IMR-90 (cell line): ENCODE measurements at regions of chr12 and their contacts with region 1.

Region 1: GRCh38 chr12:76763743-76764675 is at the start of gene ZDHHC17:
- DNase-seq: peak; percentile 92
- ATAC-seq: peak; percentile 94
- H3K4me3 ChIP-seq: peak within 1 kb of the TSS; percentile 96
- H3K27ac ChIP-seq: peak within 1 kb of the TSS; percentile 100
- H3K4me1 ChIP-seq: peaks cover 2% of the 10 kb centered on the region
- H3K27me3 ChIP-seq: no peaks in the 10 kb centered on the region
- CTCF ChIP-seq: no peak
- POLR2A ChIP-seq: peak; percentile 79
- RAD21 ChIP-seq: no peak
- total RNA-seq, gene ZDHHC17: 86.4 and 125 TPM in 2 replicates

Region 2: DNA sequence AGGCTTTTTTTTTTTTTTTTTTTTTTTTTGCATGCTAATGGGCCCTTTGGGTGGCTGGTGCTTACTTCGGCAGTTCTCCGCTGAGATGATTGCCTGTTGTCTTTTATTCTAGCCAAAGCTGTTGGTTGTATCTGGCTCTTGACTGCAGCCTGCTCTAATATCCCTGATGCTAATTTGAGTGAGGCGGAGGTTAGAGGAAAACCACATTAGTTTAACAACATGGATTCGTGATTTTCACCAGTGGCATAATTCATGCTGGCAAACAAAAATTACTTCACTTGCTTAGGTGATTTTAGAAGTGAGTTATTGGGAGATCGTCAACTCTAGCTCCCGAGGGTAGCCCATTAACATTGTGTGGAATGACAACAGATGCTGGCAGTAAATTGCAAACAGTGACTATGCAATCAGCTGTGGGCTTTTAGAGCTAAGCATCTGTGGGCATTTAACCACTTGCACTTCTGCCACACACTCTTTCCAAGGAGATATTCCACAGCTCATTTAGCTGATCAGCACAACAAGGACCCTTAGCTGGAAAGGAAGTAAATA is 97.6 kb before region 1 on chr12:
- CTCF ChIA-PET with region 1: no interaction called
- POLR2A ChIA-PET with region 1: no interaction called
- dilution Hi-C with region 1: no loop called
- in situ Hi-C with region 1: no loop called
- intact Hi-C with region 1: no loop called
- DNase-seq: no peak
- ATAC-seq: no peak
- H3K4me3 ChIP-seq: no peak overlapping the region
- H3K27ac ChIP-seq: no peak overlapping the region
- H3K4me1 ChIP-seq: peaks cover 9% of the 10 kb centered on the region
- H3K27me3 ChIP-seq: no peaks in the 10 kb centered on the region
- CTCF ChIP-seq: no peak
- POLR2A ChIP-seq: no peak
- RAD21 ChIP-seq: no peak

Region 3: GRCh38 chr12:76685246-76685678 is 78.7 kb before region 1 on chr12:
- CTCF ChIA-PET with region 1: interaction called, 5 read pairs
- POLR2A ChIA-PET with region 1: no interaction called
- dilution Hi-C with region 1: no loop called
- in situ Hi-C with region 1: no loop called
- intact Hi-C with region 1: loop called (anchors 5 kb)
- DNase-seq: peak; percentile 55
- ATAC-seq: peak; percentile 38
- H3K4me3 ChIP-seq: no peak overlapping the region
- H3K27ac ChIP-seq: peak overlapping the region; percentile 4; the same call in 1 of the 2 replicates
- H3K4me1 ChIP-seq: peaks cover 15% of the 10 kb centered on the region
- H3K27me3 ChIP-seq: no peaks in the 10 kb centered on the region
- CTCF ChIP-seq: no peak
- POLR2A ChIP-seq: no peak
- RAD21 ChIP-seq: no peak

Region 4: DNA sequence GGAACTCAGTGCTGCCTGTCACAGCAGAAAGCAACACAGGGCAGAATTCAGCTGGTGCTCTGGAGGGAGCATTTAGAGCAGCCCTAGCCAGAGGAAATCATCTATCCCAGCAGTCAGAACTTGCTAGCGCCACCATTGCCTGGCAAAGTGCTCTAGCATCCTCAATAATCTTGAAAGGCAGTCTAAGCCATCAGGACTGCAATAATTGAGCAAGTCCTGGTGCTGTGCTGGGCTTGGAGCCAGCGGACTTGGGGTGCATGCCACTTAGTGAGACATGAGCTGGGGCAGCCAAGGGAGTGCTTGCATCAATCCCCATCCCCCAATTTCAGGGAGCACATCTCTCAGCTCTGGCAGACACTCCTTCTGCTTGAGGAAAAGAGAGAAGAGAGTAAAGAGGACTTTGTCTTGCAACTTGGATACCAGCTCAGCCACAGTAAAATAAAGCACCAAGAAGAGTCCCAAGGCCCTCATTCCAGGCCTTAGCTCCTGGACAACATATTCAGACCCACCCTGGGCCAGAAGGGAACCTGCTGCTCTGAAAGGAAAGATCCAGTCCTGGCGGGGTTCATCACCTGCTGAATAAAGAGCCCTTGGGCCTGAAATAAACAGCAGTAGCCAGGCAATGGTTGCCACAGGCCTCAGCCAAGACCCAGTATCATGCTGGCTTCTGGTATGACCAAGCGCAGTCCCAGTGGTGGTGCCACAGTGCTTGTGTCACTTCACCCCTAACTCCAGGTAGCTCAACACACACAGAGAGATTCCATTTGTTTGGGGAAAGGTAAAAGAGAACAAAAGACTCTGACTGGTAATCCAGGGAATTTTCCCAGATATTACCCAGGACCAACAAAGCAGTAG is 44.6 kb before region 1 on chr12:
- CTCF ChIA-PET with region 1: no interaction called
- POLR2A ChIA-PET with region 1: no interaction called
- dilution Hi-C with region 1: no loop called
- in situ Hi-C with region 1: no loop called
- intact Hi-C with region 1: loop called (anchors 5 kb)
- DNase-seq: peak; percentile 50
- ATAC-seq: peak; percentile 44
- H3K4me3 ChIP-seq: no peak overlapping the region
- H3K27ac ChIP-seq: peak overlapping the region; percentile 93
- H3K4me1 ChIP-seq: peaks cover 16% of the 10 kb centered on the region
- H3K27me3 ChIP-seq: no peaks in the 10 kb centered on the region
- CTCF ChIP-seq: no peak
- POLR2A ChIP-seq: no peak
- RAD21 ChIP-seq: no peak

Region 5: DNA sequence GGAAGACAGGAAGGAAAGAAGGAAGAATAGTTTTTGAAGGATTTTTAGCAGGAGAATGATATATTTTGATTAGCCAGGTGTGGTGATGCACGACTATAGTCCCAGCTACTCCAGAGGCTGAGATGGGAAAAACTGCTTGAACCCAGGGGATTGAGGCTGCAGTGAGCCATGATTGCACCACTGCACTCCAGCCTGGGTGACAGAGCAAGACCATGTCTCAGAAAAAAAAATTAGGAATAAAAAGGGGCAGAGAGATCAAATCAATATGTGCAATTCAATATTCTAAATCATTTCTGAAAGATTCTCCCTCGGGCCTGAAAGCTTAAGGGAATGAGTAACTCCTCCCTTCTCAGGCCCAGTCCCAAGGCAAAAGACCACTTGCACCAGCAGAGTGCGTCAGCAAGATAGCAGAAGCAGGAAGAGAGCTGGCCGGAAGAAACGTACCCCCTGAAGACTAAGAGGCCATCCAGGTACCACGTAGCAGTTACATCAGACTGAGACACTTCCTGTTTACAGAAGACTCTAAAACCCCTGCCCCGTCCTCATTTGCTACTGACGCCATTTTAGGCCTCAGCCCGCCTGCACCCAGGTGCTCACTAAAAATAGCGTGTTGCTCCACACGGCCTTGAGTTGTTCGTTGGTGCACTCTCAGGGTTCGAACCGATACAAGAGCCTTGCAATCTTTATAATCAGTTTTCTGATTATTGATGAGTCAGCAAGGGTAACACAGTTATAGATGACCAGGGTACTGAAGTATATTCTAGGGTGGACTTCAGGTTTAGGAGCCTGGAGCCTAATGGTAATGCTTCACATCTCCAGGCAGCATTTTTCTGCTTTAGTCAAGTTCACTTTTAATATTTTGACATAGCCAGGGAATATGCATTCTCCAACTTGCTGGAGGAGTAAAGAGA is 172.5 kb after region 1 on chr12:
- CTCF ChIA-PET with region 1: no interaction called
- POLR2A ChIA-PET with region 1: interaction called, 12 read pairs
- dilution Hi-C with region 1: no loop called
- in situ Hi-C with region 1: no loop called
- intact Hi-C with region 1: no loop called
- DNase-seq: no peak
- ATAC-seq: no peak
- H3K4me3 ChIP-seq: no peak overlapping the region
- H3K27ac ChIP-seq: no peak overlapping the region
- H3K4me1 ChIP-seq: no peaks in the 10 kb centered on the region
- H3K27me3 ChIP-seq: no peaks in the 10 kb centered on the region
- CTCF ChIP-seq: no peak
- POLR2A ChIP-seq: no peak
- RAD21 ChIP-seq: no peak